Head of caudate nucleus (tissue), 42 donors: ENCODE measurements at regions of chr14 and their contacts with region 1.

Region 1: DNA sequence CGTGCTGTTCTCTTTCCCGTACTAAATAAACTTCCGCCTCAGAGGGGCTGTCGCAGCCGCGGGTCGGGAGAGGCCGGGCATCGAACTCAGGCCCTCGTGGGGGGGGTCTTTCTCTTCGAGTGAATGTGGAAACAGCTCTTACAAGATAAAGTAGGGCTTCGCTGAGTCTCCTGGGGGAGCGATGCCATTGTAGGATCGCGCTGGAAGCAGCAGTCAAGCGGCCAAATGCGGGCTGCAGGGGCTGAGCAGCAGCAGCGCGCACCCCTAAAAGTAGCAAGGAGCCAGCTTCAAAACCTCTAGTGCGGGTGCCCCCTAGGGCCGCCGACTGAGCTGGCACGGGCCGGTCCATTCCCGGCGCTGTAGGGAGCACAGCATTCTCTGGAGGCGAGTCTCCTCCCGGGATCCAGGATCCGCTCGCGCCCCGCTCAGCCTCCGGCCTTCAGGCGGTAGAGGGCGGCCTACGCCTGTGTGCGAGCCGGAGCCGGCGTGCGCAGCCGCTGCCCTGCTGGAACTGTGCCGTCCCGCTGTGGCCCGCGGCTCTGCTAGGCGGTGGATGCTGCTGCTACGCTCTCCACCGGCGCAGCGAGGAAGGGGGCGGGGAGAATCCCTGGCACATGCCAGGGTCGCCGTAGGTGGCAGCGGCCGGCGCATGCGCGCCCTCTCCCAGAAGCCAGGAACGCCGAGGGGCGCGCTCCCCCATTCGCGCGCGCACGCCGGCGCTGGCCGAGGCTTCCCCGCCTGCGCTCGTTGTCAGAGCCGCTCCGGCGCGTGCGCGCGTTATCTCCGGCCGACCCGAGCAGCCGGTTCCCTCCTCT is at the start of gene FUT8:
- DNase-seq: peak; percentile 81 to 98 (median 95)

Region 2: DNA sequence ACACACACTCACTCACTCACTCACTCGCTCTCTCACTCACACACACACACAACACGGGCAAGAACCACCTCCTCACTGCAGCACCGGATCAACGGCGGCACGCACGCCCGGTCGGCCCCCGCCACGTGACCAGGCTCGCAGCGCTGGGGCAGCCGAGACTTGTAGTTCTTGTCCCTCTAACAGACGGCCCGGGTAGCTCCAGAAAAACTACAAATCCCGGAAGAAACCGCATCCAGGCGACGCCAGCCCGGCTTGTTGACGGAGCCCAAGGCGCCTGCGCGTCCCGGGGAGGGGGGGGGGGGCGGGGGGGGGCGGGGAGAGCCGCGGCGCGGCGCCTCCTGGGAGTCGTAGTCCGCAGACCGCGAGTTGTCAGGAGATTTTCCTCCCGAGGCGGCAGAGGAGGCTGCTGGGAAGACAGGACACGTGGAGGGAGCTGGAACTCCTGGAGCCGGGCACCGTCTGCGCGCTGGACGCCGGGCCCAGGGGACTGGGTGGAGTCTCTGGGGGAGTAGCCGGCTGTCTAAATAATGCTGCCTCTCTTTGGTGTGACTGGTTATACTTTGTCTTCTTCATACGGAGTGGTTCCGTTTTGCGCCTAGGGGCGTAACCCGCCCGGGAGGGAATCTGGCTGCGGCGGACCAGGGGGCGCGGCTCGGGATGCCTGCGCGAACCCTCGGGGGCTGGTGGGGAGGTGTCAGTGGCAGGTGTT is 309.6 kb before region 1 on chr14 and contains the start of gene MAX:
- intact Hi-C with region 1: loop called (anchors 5 kb)
- DNase-seq: peak; percentile 98 to 100 (median 99)

Region 3: GRCh38 chr14:65117769-65118701 is 294.2 kb before region 1 on chr14:
- intact Hi-C with region 1: no loop called
- DNase-seq: no peak

Region 4: DNA sequence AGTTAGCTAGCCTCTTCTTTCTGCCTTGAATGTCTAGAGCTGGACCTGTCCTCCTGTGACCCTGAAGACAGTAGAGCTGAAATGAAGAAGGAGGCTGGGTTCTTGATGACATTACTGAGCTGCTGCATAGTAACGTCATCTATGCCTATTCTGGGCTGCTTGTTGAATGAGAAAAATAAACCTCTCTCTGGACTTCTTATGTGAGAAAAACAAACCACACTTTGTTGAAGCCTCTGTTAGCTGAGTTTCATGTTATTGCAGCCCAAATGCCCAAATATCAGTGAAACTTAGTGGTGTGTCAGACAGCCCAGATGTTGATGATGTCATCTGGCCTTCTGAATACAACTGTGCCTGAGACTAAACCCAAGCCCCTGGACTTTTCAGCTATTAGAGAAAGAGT is 242.9 kb before region 1 on chr14:
- intact Hi-C with region 1: loop called (anchors 5 kb)
- DNase-seq: peak in 30 of 42 donors; percentile 17 to 83 (median 54)

Region 5: DNA sequence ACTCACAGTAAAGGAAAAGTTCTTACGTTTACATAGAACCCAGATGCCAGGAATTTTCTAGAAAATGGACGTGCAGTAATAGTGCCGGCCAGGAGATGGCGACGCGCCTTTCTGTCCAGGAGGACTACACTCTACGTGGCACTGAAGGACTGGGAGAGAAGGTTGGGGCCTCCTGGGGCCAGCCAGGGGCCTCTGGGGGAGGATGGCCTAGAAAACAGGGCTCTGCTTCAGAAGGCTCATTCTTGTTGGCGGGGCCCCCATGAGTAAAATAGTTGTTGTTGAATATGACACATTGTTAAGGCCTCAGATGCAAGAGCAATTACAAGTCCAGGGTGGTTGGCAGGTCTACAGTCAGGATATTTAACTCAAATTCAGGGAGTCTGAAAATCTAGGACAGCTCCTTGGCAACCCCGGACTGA is 189.8 kb before region 1 on chr14:
- intact Hi-C with region 1: loop called (anchors 2 kb)
- DNase-seq: peak in 41 of 42 donors; percentile 41 to 87 (median 71)

Region 6: GRCh38 chr14:65281991-65282895 is 130.0 kb before region 1 on chr14:
- intact Hi-C with region 1: loop called (anchors 2 kb)
- DNase-seq: peak; percentile 60 to 95 (median 86)

Region 7: GRCh38 chr14:65486868-65487267 is 74.6 kb after region 1 on chr14:
- intact Hi-C with region 1: no loop called
- DNase-seq: no peak

Region 8: GRCh38 chr14:65824285-65824977 is 412.2 kb after region 1 on chr14:
- intact Hi-C with region 1: loop called (anchors 10 kb)
- DNase-seq: peak in 41 of 42 donors; percentile 12 to 87 (median 65)